ENCODE measurements at regions of chr9 and their contacts with region 1.

Region 1: GRCh38 chr9:37333288-37333687 is 89.2 kb upstream of the GRHPR start:
- DNase-seq: no peak
- H3K4me3 ChIP-seq: no peak overlapping the region
- CTCF ChIP-seq: no peak
- POLR2A ChIP-seq: no peak

Region 2: DNA sequence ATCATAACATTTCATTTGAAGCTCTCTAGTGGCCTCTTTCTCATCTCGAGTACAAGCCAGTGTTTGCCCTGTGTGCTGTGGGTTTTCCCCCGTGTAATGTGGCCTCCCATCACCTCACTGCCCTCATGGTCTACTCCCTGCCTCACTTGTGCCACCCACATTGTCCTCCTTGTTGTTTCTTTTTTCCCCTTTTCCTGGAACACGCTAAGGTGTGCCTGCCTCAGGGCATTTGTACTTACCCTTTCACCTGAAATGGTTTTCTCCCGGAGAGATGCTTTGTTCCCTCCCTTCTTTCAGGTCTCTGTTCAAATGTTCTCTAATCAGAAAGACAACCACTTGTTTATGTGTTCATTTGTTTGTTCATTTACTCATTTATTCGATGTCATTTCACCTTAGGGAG is 720.3 kb before region 1 on chr9:
- intact Hi-C with region 1: loop called (anchors 10 kb)
- DNase-seq: no peak
- H3K4me3 ChIP-seq: no peak overlapping the region
- CTCF ChIP-seq: no peak
- POLR2A ChIP-seq: no peak

Measured in lower leg skin (tissue), 4 donors.